Posterior cingulate gyrus (tissue), 11 donors: ENCODE measurements at regions of chr6 and their contacts with region 1.

Region 1: DNA sequence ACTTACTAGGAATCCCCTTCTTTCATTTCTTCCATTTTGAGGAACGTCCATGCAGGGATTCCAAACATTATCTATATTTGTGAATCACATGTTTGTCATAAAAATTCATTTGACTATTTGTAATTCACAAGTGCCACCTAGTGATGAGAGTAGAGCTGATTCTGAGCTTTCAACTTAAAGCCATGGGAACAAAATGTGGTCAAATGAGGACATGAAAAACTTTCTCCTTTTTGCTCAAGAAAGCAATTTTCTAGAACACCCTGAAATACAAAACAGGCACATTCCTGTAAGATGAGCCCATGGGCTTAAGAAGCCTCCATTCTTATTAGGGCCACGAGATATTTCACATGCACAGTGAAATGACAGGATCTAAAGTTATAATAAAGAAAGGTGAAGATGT is 12.3 kb downstream of the MAP3K7 start:
- DNase-seq: no peak

Region 2: GRCh38 chr6:89934685-89935366 is 639.8 kb before region 1 on chr6:
- intact Hi-C with region 1: loop called (anchors 5 kb)
- DNase-seq: peak in 5 of 10 donors; percentile 34 to 93 (median 82)

Region 3: DNA sequence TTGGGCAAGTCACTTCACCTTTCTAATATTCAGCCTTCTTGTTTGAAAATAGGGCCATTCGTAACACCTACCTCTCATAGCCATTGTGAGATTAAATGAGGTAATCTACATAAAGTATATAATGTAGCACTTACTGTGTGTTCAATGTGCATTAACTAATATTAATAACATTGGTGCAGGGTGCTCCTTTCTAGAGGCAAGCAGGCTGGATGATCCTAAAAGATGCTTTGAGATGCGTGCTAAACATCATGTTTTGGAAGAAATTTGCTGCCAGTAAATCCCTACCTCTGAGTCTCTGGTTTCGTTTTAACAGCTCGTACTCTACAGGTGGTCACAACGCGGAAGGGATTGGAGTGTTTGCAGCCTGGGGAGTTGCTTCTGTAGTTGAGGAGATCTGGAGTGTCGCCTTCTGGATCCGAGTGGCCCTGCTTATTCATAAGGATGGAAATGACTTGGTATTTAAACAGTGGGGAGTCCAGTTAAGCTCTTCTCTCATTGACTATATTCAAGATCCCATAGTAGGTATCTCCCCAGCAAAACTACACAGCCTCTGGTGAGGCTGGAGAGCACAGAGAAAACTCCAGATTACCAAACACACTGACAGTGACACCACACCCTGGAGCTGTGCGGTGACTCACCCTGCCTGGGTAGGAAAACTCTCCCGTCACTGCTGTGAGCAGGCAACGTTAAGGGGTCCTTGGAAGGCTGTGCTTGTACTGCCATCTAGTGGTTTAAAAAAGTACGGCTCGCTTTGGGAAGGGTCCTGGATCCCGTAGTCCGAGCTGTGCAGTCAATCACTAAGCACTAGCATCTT is 95.6 kb before region 1 on chr6:
- intact Hi-C with region 1: no loop called
- DNase-seq: peak; percentile 69 to 97 (median 84)

Region 4: DNA sequence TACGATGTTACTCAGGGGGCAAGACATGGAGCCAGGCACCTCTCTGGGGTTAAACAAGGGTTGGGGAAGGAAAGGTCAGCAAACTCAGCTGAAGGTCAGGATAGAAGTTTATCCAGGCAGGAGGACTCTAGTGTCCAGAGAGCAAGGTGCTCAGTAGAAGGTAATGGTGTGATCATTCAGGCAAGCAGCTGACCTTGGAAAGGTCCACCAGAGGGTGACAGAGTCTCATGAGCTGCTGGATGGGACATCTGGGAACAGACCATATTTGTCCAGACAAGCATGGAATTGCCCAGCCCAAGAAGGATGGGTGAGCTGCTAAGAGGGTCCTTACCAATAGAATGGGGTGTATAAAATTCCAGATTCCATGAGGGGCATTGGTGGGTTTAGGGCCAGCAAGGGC is 77.2 kb before region 1 on chr6:
- intact Hi-C with region 1: loop called (anchors 2 kb)
- DNase-seq: no peak